Mammary epithelial cell (primary cell): ENCODE measurements at regions of chr7 and their contacts with region 1.

Region 1: GRCh38 chr7:129635300-129636029 is 23.9 kb downstream of the NRF1 start:
- DNase-seq: peak; percentile 62
- H3K4me3 ChIP-seq: no peak overlapping the region
- H3K27ac ChIP-seq: no peak overlapping the region
- H3K4me1 ChIP-seq: no peaks in the 10 kb centered on the region
- H3K27me3 ChIP-seq: no peaks in the 10 kb centered on the region
- CTCF ChIP-seq: peak; percentile 82 to 93

Region 2: GRCh38 chr7:129367700-129368388 is 267.6 kb before region 1 on chr7:
- CTCF ChIA-PET with region 1: no interaction called
- dilution Hi-C with region 1: no loop called
- in situ Hi-C with region 1: loop called (anchors 25 kb)
- intact Hi-C with region 1: loop called (anchors 2 kb)
- DNase-seq: peak; percentile 42
- H3K4me3 ChIP-seq: no peak overlapping the region
- H3K27ac ChIP-seq: no peak overlapping the region
- H3K4me1 ChIP-seq: no peaks in the 10 kb centered on the region
- H3K27me3 ChIP-seq: no peaks in the 10 kb centered on the region
- CTCF ChIP-seq: peak; percentile 82 to 89

Region 3: GRCh38 chr7:129502376-129502776 is 133.1 kb before region 1 on chr7 and contains the start of gene SMKR1:
- CTCF ChIA-PET with region 1: no interaction called
- dilution Hi-C with region 1: no loop called
- in situ Hi-C with region 1: loop called in 1 of 2 experiments (anchors 10 kb)
- intact Hi-C with region 1: loop called (anchors 1 kb)
- DNase-seq: peak; percentile 60
- H3K4me3 ChIP-seq: peak within 1 kb of the TSS; percentile 52 to 61 (median 53)
- H3K27ac ChIP-seq: no peak within 1 kb of the TSS
- H3K4me1 ChIP-seq: peaks cover 7% of the 10 kb centered on the region
- H3K27me3 ChIP-seq: no peaks in the 10 kb centered on the region
- CTCF ChIP-seq: no peak
- total RNA-seq, gene SMKR1: 0.80 TPM in 1 of 2 donors, not detected in the other

Region 4: GRCh38 chr7:129591868-129592267 is 43.6 kb before region 1 on chr7:
- CTCF ChIA-PET with region 1: no interaction called
- dilution Hi-C with region 1: no loop called
- in situ Hi-C with region 1: no loop called
- intact Hi-C with region 1: no loop called
- DNase-seq: no peak
- H3K4me3 ChIP-seq: no peak overlapping the region
- H3K27ac ChIP-seq: no peak overlapping the region
- H3K4me1 ChIP-seq: peaks cover 6% of the 10 kb centered on the region
- H3K27me3 ChIP-seq: no peaks in the 10 kb centered on the region
- CTCF ChIP-seq: no peak

Region 5: GRCh38 chr7:129611246-129612111 is 24.0 kb before region 1 on chr7 and contains the start of gene NRF1:
- CTCF ChIA-PET with region 1: interaction called, 6 read pairs
- dilution Hi-C with region 1: no loop called
- in situ Hi-C with region 1: no loop called
- intact Hi-C with region 1: loop called (anchors 1 kb)
- DNase-seq: peak; percentile 90
- H3K4me3 ChIP-seq: peak within 1 kb of the TSS; percentile 77 to 95 (median 87)
- H3K27ac ChIP-seq: peak within 1 kb of the TSS; percentile 80
- H3K4me1 ChIP-seq: peaks cover 27% of the 10 kb centered on the region
- H3K27me3 ChIP-seq: no peaks in the 10 kb centered on the region
- CTCF ChIP-seq: peak in 1 of 2 donors; percentile 12
- total RNA-seq, gene NRF1: 11.3 to 14.3 TPM